A673 (cell line): ENCODE measurements at regions of chrX and their contacts with region 1.

Region 1: DNA sequence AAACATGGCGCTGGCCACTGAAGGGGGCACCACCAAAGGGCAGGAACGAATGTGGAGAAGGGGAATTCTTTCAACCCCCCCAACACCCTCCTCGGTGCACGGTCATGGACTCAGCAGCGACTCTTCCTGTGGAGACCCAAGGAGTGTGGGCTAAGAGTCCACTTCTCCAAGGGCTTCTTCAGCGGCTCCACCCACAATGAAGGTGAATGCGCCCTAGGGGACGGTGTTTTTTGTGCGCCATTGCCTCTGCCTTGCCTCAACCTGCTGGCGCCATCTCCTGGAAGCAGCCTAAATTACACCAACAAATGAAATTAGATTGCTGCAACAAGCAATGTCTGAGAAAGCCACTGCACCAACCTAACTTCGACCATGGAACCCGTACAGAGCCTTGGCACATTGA is 169.2 kb upstream of the MAGEB18 start:
- DNase-seq: peak; percentile 65
- H3K4me3 ChIP-seq: no peak overlapping the region
- H3K27ac ChIP-seq: no peak overlapping the region
- H3K4me1 ChIP-seq: no peaks in the 10 kb centered on the region
- H3K27me3 ChIP-seq: no peaks in the 10 kb centered on the region
- CTCF ChIP-seq: peak; percentile 83

Region 2: DNA sequence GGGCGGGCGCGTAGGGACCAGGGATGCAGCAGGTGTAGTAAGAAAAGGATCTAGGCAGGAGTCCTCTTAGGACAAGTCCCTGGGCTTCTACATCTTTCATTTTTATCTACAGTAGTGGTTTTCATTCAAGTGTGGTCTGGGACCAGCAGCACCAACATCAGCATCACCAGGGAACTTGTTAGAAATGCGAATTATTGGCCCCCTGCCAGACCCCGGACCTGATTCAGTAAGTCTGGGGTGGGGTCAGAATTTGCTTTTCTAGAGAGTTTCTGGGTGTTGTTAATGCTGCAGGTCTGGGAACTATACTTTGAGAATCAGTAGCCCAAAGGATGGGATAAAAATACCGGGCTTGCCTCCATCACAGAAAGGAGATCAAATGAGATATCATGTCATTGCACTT is 1320.4 kb before region 1 on chrX:
- CTCF ChIA-PET with region 1: no interaction called
- POLR2A ChIA-PET with region 1: no interaction called
- intact Hi-C with region 1: no loop called
- DNase-seq: no peak
- H3K4me3 ChIP-seq: no peak overlapping the region
- H3K27ac ChIP-seq: no peak overlapping the region
- H3K4me1 ChIP-seq: no peaks in the 10 kb centered on the region
- H3K27me3 ChIP-seq: no peaks in the 10 kb centered on the region
- CTCF ChIP-seq: no peak

Region 3: GRCh38 chrX:25523574-25524540 is 445.1 kb before region 1 on chrX:
- CTCF ChIA-PET with region 1: interaction called, 4 read pairs
- POLR2A ChIA-PET with region 1: no interaction called
- intact Hi-C with region 1: loop called (anchors 1 kb)
- DNase-seq: peak; percentile 68
- H3K4me3 ChIP-seq: no peak overlapping the region
- H3K27ac ChIP-seq: no peak overlapping the region
- H3K4me1 ChIP-seq: no peaks in the 10 kb centered on the region
- H3K27me3 ChIP-seq: peaks cover 10% of the 10 kb centered on the region
- CTCF ChIP-seq: peak; percentile 64

Region 4: DNA sequence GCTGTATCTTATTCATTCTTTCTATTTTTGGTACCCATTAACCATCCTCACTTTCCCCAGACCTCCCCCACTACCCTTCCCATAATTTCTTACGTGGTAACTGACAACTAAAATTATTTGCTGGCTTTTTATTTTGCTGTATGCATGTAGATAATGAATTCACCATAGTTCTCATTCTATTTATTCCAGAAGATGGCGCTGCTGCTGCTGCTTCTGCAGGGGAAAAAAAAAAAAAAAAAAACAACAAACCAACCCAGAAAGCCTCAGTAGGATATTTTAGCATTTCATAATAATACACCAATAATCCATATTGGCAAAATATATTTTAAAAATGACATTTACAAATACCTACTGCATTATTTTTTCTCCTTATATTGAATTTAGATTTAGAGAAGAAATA is 247.4 kb before region 1 on chrX:
- CTCF ChIA-PET with region 1: no interaction called
- POLR2A ChIA-PET with region 1: no interaction called
- intact Hi-C with region 1: loop called (anchors 1 kb)
- DNase-seq: peak; percentile 39
- H3K4me3 ChIP-seq: no peak overlapping the region
- H3K27ac ChIP-seq: no peak overlapping the region
- H3K4me1 ChIP-seq: no peaks in the 10 kb centered on the region
- H3K27me3 ChIP-seq: peaks cover 13% of the 10 kb centered on the region
- CTCF ChIP-seq: peak; percentile 73